GM23248 (cell line): ENCODE measurements at regions of chr20 and their contacts with region 1.

Region 1: DNA sequence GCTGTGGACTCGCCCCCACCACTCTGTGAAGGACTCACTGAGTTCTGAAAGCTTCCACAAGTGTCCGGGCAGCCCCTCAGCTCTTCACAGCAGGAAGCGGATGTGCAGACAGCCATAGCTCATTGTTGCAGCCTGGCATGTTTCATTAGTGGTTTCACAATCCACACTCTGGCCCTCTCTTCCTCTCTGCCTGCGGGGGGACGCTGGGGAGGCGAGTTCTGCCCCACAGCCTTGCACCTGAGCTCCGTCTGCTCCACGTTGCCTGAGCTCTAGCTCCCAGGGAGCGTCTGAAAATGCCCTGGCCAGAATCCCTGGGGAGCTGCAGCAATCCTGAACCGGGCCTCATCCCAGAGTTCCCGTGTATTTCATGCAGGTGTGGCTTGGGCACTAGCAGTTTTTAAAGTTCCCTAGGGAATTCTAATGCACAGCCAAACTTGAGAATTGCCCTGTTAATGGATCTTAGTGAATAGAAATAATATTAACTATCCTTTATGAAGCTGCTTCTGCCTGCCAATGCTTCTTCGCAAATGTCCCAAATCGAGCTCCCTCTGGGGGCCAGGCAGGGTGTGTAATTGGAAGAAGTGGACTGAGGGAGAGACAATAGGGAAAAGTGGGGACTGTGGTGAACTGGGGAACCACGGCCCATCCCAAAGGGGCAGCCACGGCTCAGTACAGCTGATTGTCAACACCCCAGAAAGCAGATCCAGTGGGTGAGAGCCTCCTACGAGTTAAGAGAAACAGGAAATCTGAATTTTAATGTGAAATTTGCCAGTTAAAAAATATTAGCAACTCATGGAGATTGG is 51.5 kb downstream of the CTCFL start:
- DNase-seq: no peak
- H3K4me3 ChIP-seq: no peak overlapping the region
- H3K27ac ChIP-seq: no peak overlapping the region
- H3K4me1 ChIP-seq: no peaks in the 10 kb centered on the region
- H3K27me3 ChIP-seq: peaks cover 75% of the 10 kb centered on the region

Region 2: GRCh38 chr20:57030611-57031600 is 442.5 kb before region 1 on chr20:
- in situ Hi-C with region 1: no loop called
- DNase-seq: peak; percentile 79
- H3K4me3 ChIP-seq: no peak overlapping the region
- H3K27ac ChIP-seq: peak overlapping the region; percentile 48
- H3K4me1 ChIP-seq: peaks cover 17% of the 10 kb centered on the region
- H3K27me3 ChIP-seq: no peaks in the 10 kb centered on the region

Region 3: DNA sequence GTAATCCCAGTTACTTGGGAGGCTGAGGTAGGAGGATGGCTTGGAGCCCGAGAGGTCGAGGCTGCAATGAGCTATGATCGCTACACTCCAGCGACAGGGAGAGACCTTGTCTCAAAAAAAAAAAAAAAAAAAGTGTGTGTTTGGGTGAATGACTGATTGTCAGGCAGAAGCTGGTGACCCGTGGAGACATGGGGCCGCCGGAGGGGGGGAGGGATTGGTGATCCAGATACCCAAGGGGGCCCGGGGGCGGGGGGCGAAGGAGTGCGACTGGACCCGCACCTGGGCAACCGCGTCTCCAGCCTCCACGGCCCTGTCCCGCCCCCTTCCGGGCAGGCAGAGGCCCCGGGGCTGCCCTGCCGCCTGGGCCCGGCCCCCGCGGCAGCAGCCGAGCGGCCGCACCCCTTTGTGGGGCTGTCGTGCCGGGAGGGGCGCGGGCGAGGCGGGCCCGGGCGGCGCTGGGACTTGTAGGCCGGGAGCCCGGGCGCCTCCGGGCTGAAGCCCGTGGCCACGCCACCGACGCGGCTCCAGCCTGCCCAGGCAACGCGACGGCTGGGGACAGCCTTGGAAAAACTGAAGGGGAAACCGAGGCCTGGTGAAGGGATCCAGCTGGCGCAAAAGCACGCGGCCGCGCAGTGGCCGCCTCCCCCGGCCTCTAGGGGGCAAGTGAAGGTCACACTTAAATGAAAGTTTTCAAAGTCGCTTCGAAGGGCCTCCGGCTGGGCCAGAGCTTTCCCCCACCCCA is 84.3 kb before region 1 on chr20:
- in situ Hi-C with region 1: loop called (anchors 10 kb)
- DNase-seq: peak; percentile 78
- H3K4me3 ChIP-seq: peak overlapping the region; percentile 58
- H3K27ac ChIP-seq: no peak overlapping the region
- H3K4me1 ChIP-seq: no peaks in the 10 kb centered on the region
- H3K27me3 ChIP-seq: no peaks in the 10 kb centered on the region

Region 4: DNA sequence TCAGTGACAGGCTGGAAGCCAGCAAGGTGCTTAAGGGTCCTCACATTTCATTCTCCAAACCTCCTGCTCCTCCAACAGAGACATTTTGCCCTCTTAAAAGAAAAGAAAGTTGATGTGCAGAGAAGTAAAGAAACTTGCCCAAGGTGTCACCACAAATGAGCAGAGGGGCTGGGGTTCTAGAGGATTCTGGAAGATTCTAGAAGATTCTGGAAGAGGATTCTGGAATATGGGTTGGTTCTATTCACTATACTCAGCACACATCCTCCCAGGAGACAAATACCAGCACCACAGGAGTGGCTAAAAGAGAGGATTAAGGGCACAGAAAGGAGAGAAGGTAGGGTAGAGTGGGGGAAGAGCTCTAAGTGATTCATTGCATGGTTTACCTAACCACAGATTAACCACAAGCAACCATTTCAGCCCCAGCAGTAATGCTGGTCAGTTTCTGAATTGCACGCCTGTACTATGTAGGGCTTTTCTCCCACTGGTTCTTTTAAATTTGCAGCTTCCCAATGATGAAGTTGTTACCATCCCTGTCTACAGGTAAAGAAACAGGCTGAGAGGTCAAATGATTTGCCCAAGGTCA is 428.9 kb after region 1 on chr20:
- in situ Hi-C with region 1: no loop called
- DNase-seq: peak; percentile 85
- H3K4me3 ChIP-seq: no peak overlapping the region
- H3K27ac ChIP-seq: no peak overlapping the region
- H3K4me1 ChIP-seq: peaks cover 11% of the 10 kb centered on the region
- H3K27me3 ChIP-seq: peaks cover 16% of the 10 kb centered on the region; the same call in 1 of the 2 replicates